Activated CD8-positive, alpha-beta memory T cell treated with anti-CD3 and anti-CD28 coated beads, Interleukin-2, amount 10 ng/mL, durations not matched to agents 7 days and 5 days (primary cell): ENCODE measurements at regions of chr4 and their contacts with region 1.

Region 1: GRCh38 chr4:73258686-73259570 is at the start of gene ANKRD17:
- DNase-seq: peak; percentile 95
- ATAC-seq: peak; percentile 82
- H3K4me3 Mint-ChIP-seq: peak within 1 kb of the TSS; percentile 99
- H3K27ac Mint-ChIP-seq: peak within 1 kb of the TSS; percentile 98
- H3K4me1 Mint-ChIP-seq: peaks cover 45% of the 10 kb centered on the region
- H3K27me3 Mint-ChIP-seq: no peaks in the 10 kb centered on the region
- total RNA-seq, gene ANKRD17: 50.6 to 57.5 TPM

Region 2: DNA sequence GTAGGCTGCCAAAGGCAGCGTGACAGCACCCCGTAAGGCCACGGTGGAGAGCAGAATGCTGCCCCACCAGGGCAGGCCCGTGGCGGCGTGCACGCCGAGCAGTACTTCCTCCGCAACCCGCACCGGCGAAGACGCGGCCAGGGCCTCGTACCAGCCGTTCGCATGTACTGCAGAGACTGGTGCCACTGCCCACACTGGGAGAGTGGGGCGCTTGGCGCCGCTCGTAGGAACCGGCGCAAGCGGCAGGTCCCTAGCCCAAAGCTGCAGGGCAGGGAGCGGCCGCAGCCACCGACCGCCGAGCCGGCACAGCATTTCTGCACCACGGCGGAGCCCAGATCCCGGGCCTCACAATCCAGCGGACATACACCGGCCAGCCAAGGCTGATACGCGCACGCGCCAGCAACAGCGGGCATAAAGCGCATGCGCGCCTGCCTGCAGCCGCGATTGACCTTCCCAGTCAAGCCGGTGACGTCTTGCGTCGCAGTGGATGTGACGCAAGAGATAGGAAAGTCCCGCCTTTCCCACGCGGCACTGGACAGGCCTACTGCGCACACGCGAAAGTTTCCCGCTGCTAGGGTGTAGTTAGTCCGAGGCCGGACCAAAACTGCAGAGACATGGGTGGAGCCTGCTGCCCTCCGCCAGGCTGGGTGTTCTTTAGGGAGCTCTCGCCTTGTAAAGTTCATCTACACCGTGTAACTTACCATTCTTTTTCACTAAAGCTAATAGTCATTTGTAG is 189.4 kb before region 1 on chr4 and contains the start of gene COX18:
- CTCF ChIA-PET with region 1: interaction called, 22 read pairs
- DNase-seq: peak; percentile 98
- ATAC-seq: peak; percentile 84
- H3K4me3 Mint-ChIP-seq: peak within 1 kb of the TSS; percentile 93
- H3K27ac Mint-ChIP-seq: peak within 1 kb of the TSS; percentile 98
- H3K4me1 Mint-ChIP-seq: peaks cover 27% of the 10 kb centered on the region
- H3K27me3 Mint-ChIP-seq: no peaks in the 10 kb centered on the region
- total RNA-seq, gene COX18: 13.2 to 15.5 TPM

Region 3: GRCh38 chr4:73127839-73128453 is 131.0 kb before region 1 on chr4:
- CTCF ChIA-PET with region 1: interaction called, 10 read pairs
- DNase-seq: no peak
- ATAC-seq: peak; percentile 66
- H3K4me3 Mint-ChIP-seq: no peak overlapping the region
- H3K27ac Mint-ChIP-seq: no peak overlapping the region
- H3K4me1 Mint-ChIP-seq: no peaks in the 10 kb centered on the region
- H3K27me3 Mint-ChIP-seq: no peaks in the 10 kb centered on the region

Region 4: DNA sequence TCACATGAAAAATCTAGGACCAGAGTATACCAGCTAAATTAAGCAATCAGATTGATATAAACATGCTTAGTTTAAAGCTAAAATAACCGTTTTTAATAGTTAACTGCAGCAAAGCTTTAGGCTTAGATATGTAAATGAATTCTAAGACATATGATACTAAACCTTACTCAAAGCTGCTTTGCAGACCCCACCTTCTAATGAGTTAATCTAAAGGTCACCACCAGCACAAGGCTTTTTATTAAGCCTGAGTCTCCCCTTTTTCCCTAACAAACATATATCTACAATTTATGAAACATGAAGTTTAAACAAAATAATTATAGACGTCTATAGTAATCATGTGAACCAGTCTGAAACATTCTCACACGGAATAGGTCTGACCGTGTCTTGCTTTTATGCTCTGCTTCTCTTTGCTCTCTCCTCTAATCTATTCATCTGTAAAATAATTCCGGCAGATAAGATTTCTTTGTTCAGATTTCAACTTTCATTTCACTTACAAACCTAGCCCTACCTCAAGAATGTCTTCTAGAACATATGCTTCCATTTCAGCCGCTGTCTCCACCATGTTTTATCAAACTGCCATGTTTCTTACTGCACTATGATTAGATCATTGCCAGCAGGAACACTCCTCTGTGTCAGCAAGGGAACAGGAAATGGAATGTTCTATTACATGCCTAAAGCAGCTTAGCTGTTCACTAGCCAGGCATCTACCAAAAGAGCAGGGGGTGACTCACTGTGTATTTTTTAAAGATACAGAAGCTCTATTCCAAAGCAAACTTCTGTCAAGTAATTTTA is 36.3 kb before region 1 on chr4:
- CTCF ChIA-PET with region 1: interaction called, 14 read pairs
- DNase-seq: peak; percentile 73
- ATAC-seq: peak; percentile 100
- H3K4me3 Mint-ChIP-seq: no peak overlapping the region
- H3K27ac Mint-ChIP-seq: no peak overlapping the region
- H3K4me1 Mint-ChIP-seq: peaks cover 20% of the 10 kb centered on the region
- H3K27me3 Mint-ChIP-seq: no peaks in the 10 kb centered on the region